Psoas muscle (tissue), 8 donors: ENCODE measurements at regions of chr5 and their contacts with region 1.

Region 1: DNA sequence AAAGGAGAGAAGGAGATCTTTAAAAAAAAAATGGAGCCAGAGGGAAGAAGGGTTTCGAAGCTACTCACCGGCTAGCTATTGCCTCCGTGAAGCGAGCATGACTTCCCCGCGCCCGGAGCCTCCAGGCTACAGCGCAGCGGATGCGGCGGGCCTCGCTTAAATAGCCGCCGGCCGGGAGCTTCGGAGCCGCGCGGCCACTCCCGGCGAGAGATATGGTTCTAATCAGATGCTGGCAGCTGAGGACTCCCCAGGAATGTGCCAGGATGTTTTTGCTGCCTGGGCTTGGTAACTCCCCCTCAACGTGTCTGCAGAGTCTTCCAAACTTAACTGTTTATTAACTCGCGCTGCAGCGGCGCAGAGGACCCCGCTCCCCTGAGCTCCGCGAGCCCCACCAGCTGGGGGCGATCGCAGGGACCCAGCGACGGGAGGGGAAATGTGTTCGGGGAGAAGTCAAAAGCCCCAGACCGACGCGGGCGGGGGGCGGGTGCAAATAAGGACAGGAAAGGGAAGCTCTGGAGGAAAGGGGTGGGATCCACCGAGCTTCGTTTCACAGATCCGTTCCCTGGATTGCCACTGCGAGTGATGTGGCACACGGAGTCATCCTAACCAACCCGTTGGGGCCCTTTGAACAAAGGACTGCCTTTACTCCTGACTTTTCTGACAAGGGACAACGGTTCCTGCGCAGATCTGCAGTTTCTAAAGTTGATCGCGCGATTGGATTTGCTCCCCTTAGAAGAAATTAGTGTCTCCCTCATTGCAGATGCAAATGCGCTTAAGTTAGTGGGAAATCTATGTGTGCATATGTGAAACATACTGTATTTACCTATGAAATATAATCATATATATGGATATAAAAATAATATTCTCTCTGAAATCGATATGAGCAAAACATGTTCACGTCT is at the start of gene DAB2:
- DNase-seq: peak; percentile 89 to 90
- ATAC-seq: peak; percentile 73 to 84 (median 80)
- H3K4me3 ChIP-seq: peak within 1 kb of the TSS; percentile 72
- H3K27ac ChIP-seq: peak within 1 kb of the TSS; percentile 63
- H3K4me1 ChIP-seq: peaks cover 18% of the 10 kb centered on the region
- H3K27me3 ChIP-seq: peaks cover 0 to 12% (median 3%) of the 10 kb centered on the region in 3 donors
- CTCF ChIP-seq: peak; percentile 42
- total RNA-seq, gene DAB2: 13.5 to 37.1 (median 21.0) TPM

Region 2: GRCh38 chr5:39384271-39384670 is 40.7 kb before region 1 on chr5:
- intact Hi-C with region 1: no loop called
- DNase-seq: no peak
- ATAC-seq: no peak
- H3K4me3 ChIP-seq: no peak overlapping the region
- H3K27ac ChIP-seq: no peak overlapping the region
- H3K4me1 ChIP-seq: no peaks in the 10 kb centered on the region
- H3K27me3 ChIP-seq: no peaks in the 10 kb centered on the region
- CTCF ChIP-seq: no peak

Region 3: GRCh38 chr5:39547553-39548154 is 122.7 kb after region 1 on chr5:
- intact Hi-C with region 1: loop called in 1 of 2 experiments (anchors 5 kb)
- DNase-seq: no peak
- ATAC-seq: peak in 3 of 4 donors; percentile 40 to 74 (median 44)
- H3K4me3 ChIP-seq: no peak overlapping the region
- H3K27ac ChIP-seq: no peak overlapping the region
- H3K4me1 ChIP-seq: no peaks in the 10 kb centered on the region
- H3K27me3 ChIP-seq: no peaks in the 10 kb centered on the region
- CTCF ChIP-seq: peak; percentile 76